ENCODE measurements at regions of chr14 and their contacts with region 1.

Region 1: DNA sequence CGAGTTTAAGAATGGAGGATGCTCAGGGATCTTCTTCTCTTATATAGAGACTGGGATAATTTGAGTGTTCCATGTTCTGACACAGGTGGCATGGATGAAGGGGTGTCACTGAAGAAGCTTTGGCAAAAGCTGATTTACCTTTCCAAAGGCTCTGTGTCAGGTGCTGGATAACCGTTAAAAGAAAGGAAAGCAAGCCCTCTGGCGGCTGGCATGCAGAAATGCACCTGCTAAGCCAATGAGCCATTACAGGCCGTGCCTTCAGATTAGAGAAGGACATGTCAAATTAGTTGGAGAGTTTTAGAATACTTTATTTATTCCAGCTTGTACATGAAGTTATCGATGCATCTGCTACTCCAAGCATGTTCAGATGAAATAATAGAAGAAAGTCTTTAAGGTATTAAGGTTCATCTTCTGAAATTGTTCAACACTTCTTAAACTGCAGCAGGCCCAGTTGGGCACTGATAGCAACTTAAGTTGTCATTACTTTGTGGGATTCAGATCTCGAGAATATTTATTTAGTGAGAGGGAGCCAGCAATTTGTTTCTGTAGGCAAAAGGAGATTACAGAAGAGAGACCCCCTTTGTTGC is 678.2 kb downstream of the NRXN3 start:
- DNase-seq: peak in 8 of 10 donors; percentile 21 to 89 (median 38)

Region 2: DNA sequence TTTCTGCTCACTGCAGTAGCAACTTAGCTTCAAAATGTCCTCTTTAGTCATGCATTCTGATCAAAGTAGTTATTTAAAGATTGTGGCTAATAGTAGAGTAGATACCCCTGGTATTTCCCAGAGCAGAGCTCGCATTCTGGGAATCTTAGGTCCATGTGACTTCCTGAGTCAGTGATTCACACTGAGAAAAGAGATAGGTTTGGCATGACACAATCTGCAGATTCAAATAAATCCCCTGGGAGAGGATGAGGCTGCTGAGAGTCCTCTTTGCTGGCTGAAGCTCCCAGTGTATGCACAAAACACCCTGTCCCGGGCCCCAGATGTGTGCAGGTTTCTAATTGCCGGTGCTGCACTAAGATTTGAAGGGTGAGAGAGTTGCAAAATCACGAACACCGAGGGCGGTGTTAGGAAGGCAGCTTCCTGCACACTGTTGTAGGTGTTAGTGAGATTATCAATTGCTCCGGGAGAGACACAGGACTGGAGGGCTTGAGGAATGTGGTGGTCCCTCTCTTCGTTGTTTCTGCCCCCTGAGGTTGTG is 445.0 kb before region 1 on chr14:
- intact Hi-C with region 1: no loop called
- DNase-seq: peak in 3 of 10 donors; percentile 9 to 75 (median 24)

Region 3: GRCh38 chr14:78605897-78606500 is 242.3 kb before region 1 on chr14:
- intact Hi-C with region 1: no loop called
- DNase-seq: no peak

Region 4: GRCh38 chr14:78891263-78891662 is 42.9 kb after region 1 on chr14:
- intact Hi-C with region 1: no loop called
- DNase-seq: no peak

Region 5: DNA sequence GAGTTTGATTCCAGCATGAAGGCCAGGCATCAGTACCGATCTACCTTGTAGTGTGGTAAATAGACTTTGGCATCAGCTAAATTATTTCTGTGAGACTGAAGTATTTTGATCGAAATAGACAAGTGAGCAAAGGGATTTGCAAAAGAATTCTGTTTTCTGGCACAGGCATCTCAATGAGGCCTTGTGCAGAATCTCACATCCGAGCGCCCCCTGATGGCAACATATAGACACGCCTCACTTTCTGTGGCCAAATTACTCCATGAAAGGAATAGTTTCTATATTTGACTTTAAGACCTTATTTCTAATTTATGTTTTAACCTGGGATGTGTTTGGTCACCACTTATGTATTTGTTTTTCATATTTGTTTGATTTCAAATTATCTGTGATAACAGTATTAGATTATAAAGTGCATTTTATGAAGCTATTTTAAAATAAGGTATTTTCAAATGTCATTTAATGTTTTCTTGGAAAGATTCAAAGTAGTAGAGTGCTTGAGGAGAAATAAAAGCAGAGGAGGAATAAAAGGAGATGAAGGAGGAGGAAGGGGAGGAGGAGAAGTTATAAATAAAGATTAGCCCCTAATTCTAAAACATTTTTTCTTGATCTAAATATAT is 53.8 kb after region 1 on chr14:
- intact Hi-C with region 1: loop called (anchors 5 kb)
- DNase-seq: peak; percentile 29 to 95 (median 72)

Region 6: DNA sequence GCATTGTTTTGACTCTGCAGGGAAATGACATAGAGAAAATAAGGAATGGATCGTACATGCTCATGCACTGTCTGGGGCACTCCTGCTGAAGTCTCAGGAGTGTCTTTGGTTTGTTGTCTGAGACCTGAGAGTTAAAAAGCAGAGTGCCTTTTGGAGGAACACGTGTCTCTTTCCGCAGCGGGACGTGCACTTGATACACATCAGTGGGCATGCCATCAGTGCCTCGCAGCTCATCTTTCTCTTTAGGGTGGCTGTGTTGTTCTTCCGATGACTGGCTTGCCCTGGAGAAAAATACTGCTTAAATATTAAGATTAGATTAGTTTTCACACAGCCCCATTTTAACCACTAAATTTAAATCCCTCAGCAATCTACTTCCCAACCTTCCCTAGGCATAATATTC is 527.0 kb after region 1 on chr14:
- intact Hi-C with region 1: no loop called
- DNase-seq: no peak